ENCODE measurements at regions of chr17 and their contacts with region 1.

Region 1: DNA sequence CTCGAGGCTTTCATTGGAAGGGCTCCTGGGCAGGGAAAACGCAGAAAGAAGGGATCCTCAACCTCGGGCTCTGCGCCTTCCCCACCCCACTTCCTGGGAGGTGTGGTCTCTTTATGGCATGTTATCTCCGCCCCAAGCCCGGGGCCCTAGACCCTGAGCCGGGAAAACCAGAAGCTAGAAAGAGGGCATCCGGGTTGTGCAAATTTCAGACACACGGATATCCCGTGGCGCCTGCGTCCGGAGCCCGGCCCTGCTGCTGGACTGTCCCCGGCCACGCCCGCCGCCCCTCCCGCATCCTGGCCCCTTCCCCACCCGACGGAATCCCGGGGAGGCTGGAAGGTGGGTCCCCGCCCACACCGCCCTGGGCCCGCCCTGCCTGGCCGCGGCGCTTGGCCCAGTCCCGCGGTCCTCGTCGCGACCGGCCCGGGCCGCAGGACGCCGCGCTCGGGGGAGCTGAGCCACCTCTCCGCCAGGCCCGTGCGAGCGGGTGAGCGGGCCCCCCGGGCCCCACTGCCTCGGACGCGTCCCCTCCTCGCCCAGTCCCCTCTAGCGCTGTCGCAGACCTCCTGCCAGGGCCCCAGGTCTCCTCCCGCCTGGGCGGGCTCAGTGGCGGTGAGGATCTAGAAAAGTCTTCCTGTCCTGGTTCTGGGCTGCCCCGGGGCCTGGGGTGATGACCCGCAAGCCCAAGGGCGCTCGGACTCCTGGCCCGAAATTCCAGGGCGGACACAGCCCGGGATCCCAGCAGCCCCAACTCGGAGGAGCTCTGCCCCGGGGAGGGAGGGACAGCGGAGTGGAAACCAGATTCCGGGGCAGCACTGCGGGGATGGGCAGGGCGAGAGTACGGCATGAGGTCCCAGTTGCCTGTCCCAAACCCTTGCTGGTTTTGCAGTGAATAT is at the start of gene SLC16A5:
- DNase-seq: peak; percentile 95
- ATAC-seq: peak; percentile 85
- H3K4me3 Mint-ChIP-seq: peak within 1 kb of the TSS; percentile 86
- H3K27ac Mint-ChIP-seq: peak within 1 kb of the TSS; percentile 97
- H3K4me1 Mint-ChIP-seq: peaks cover 68% of the 10 kb centered on the region
- H3K27me3 Mint-ChIP-seq: no peaks in the 10 kb centered on the region; the same call in 1 of the 2 replicates
- CTCF ChIP-seq: no peak
- total RNA-seq, gene SLC16A5: 32.4 to 33.5 TPM (median 33.1 TPM) in 3 replicates

Region 2: DNA sequence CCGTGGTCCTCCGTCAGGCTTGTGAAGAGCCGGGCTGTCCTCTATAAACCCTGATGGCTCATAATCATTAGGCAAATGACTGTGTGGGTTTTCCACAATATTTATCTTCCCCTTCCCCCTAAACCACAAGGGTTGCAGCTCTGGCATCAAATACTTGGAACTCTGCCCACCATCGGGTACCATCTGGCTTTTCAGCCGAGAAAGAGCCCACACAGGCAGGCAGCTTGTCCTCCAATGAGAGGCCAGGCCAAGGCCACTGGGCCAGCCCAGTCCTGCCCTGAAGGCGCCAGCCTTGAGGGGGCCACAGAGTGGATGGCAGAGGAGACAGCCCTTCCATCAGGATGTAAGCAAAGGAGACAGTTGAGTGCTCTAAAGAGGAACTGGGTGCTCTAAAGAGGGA is 279.9 kb before region 1 on chr17:
- CTCF ChIA-PET with region 1: no interaction called
- POLR2A ChIA-PET with region 1: no interaction called
- DNase-seq: no peak
- ATAC-seq: no peak
- H3K4me3 Mint-ChIP-seq: no peak overlapping the region
- H3K27ac Mint-ChIP-seq: no peak overlapping the region
- H3K4me1 Mint-ChIP-seq: peaks cover 8% of the 10 kb centered on the region
- H3K27me3 Mint-ChIP-seq: no peaks in the 10 kb centered on the region
- CTCF ChIP-seq: no peak

Region 3: GRCh38 chr17:74935585-74936469 is 152.0 kb before region 1 on chr17 and contains the start of gene OTOP3:
- CTCF ChIA-PET with region 1: no interaction called
- POLR2A ChIA-PET with region 1: no interaction called
- DNase-seq: peak; percentile 43
- ATAC-seq: peak; percentile 54
- H3K4me3 Mint-ChIP-seq: peak within 1 kb of the TSS; percentile 67
- H3K27ac Mint-ChIP-seq: no peak within 1 kb of the TSS
- H3K4me1 Mint-ChIP-seq: peaks cover 2% of the 10 kb centered on the region; the same call in 1 of the 2 replicates
- H3K27me3 Mint-ChIP-seq: peaks cover 85% of the 10 kb centered on the region
- CTCF ChIP-seq: no peak
- total RNA-seq, gene OTOP3: not detected in 3 replicates

Region 4: DNA sequence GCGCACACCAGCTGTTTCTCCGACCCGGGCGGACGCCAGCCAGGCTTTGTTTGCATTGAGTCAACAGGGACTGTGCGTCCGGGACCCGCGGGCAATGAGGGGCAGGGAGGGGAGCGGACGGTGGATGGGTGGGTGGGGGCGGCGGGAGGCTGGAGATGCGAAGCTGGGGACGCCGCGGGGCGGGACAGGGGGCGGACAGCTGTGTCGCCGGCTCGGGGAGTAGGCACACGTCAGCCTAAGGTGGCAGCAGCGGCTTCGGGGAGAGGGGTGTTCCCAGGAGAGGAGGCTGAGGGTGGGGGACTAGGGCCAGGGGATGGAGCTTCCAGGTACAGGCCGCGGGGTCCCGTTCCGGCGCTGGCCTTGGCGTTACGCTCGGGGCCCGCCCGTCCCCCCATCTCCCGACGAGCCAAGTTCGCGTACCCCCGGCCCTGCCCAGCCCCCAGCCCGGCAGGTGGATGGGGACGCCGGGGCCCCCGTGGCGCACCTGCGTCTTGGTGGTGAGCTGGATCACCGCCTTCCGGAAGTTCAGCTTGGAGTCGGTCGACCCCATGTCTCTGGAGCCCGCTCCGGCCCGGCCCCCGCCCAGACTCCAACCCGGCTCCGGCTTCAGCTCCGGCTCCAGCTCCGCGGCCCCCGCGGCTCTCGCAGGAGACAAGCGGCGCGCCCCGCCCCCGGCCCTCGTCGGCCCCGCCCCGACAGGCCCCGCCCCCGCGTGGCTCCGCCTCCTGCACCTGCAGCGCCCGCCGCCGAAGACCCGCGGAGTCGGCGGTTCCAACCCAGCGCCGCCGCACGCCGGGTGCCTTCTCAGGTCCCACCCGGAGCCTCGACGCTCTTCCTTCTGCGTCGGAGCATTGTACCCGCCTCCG is 115.5 kb before region 1 on chr17 and contains the start of gene HID1:
- CTCF ChIA-PET with region 1: no interaction called
- POLR2A ChIA-PET with region 1: no interaction called
- DNase-seq: peak; percentile 89
- ATAC-seq: peak; percentile 83
- H3K4me3 Mint-ChIP-seq: peak within 1 kb of the TSS; percentile 90
- H3K27ac Mint-ChIP-seq: no peak within 1 kb of the TSS
- H3K4me1 Mint-ChIP-seq: peaks cover 12% of the 10 kb centered on the region
- H3K27me3 Mint-ChIP-seq: peaks cover 55% of the 10 kb centered on the region
- CTCF ChIP-seq: no peak
- total RNA-seq, gene HID1: 16.7 to 19.4 TPM (median 19.3 TPM) in 3 replicates

Region 5: GRCh38 chr17:74994476-74994875 is 93.3 kb before region 1 on chr17:
- CTCF ChIA-PET with region 1: no interaction called
- POLR2A ChIA-PET with region 1: no interaction called
- DNase-seq: no peak
- ATAC-seq: no peak
- H3K4me3 Mint-ChIP-seq: no peak overlapping the region
- H3K27ac Mint-ChIP-seq: no peak overlapping the region
- H3K4me1 Mint-ChIP-seq: 0 out of 2 replicates have a peak, but pooled peaks cover 4% of the 10 kb centered on the region
- H3K27me3 Mint-ChIP-seq: no peaks in the 10 kb centered on the region
- CTCF ChIP-seq: no peak

Region 6: GRCh38 chr17:75069783-75070182 is 18.0 kb before region 1 on chr17:
- CTCF ChIA-PET with region 1: interaction called, 11 read pairs
- POLR2A ChIA-PET with region 1: no interaction called
- DNase-seq: no peak
- ATAC-seq: no peak
- H3K4me3 Mint-ChIP-seq: no peak overlapping the region
- H3K27ac Mint-ChIP-seq: 0 out of 2 replicates have a peak overlapping the region, but pooled peaks have one; percentile 49
- H3K4me1 Mint-ChIP-seq: no peaks in the 10 kb centered on the region
- H3K27me3 Mint-ChIP-seq: no peaks in the 10 kb centered on the region
- CTCF ChIP-seq: no peak

Region 7: DNA sequence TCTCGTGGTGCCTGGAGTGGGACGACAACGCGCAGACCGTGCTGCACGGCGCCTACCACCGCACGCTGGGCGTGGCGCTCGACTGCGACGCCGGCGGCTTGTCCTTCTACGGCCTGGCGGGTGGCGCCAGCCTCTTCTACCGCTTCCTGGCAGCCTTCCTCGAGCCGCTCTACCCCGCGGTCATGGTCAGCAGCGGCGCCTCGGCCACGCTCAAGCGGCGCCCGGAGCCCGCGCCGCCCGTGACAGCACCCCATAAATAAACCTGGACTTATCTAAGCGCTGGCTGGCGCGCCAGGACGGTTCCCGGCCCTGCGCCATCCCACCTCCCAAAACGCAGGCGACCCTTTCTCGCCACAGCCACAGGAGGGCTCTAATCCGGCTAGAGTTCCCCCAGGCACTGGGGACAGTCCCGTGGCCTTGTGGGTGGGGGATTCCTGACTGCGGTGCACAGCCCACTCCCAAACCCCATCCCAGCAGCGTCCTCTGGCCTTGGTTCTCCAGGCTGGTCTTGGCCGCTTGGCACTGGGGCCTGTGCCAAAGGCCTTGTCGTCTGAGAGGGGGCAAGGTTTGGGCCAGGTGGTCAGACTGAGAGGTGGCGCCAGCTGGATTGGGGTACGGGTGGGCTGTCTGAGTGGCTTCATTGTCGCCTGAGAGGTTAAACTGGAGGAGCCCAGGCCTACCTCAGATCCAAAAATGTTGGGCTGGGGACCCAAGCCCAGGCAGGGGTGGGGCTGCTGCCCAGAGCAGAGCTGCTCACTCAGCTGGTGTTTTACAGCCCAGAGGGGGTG is 10.1 kb before region 1 on chr17:
- CTCF ChIA-PET with region 1: interaction called, 11 read pairs
- POLR2A ChIA-PET with region 1: interaction called, 6 read pairs
- DNase-seq: peak; percentile 51
- ATAC-seq: peak; percentile 51
- H3K4me3 Mint-ChIP-seq: peak overlapping the region; percentile 54
- H3K27ac Mint-ChIP-seq: no peak overlapping the region
- H3K4me1 Mint-ChIP-seq: peaks cover 28% of the 10 kb centered on the region
- H3K27me3 Mint-ChIP-seq: peaks cover 12% of the 10 kb centered on the region
- CTCF ChIP-seq: no peak

Measured in WTC11 (cell line).